Mammary epithelial cell (primary cell): ENCODE measurements at regions of chr5 and their contacts with region 1.

Region 1: GRCh38 chr5:128905571-128906110 is 59.6 kb upstream of the SLC27A6 start:
- DNase-seq: peak; percentile 36
- H3K4me3 ChIP-seq: no peak overlapping the region
- H3K27ac ChIP-seq: no peak overlapping the region
- H3K4me1 ChIP-seq: no peaks in the 10 kb centered on the region
- H3K27me3 ChIP-seq: peaks cover 3% of the 10 kb centered on the region
- CTCF ChIP-seq: peak; percentile 78 to 88

Region 2: GRCh38 chr5:128764911-128765310 is 140.7 kb before region 1 on chr5:
- CTCF ChIA-PET with region 1: no interaction called
- dilution Hi-C with region 1: no loop called
- in situ Hi-C with region 1: no loop called
- intact Hi-C with region 1: no loop called
- DNase-seq: no peak
- H3K4me3 ChIP-seq: no peak overlapping the region
- H3K27ac ChIP-seq: no peak overlapping the region
- H3K4me1 ChIP-seq: no peaks in the 10 kb centered on the region
- H3K27me3 ChIP-seq: no peaks in the 10 kb centered on the region
- CTCF ChIP-seq: no peak

Region 3: DNA sequence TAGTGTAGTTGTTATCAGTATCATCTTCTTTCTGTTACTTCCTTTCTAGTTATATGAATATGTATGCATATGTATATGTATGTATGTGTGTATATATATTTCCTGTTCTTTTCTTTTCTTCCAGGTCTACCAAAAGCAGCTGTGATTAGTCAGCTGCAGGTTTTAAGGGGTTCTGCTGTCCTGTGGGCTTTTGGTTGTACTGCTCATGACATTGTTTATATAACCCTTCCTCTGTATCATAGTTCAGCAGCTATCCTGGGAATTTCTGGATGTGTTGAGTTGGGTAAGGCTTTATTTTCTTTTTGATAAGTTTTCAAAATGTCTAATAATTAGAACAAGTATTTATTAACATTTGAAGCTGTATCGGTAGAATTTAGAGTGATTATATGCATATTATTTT is 82.8 kb after region 1 on chr5:
- CTCF ChIA-PET with region 1: no interaction called
- dilution Hi-C with region 1: no loop called
- in situ Hi-C with region 1: no loop called
- intact Hi-C with region 1: no loop called
- DNase-seq: no peak
- H3K4me3 ChIP-seq: no peak overlapping the region
- H3K27ac ChIP-seq: no peak overlapping the region
- H3K4me1 ChIP-seq: no peaks in the 10 kb centered on the region
- H3K27me3 ChIP-seq: no peaks in the 10 kb centered on the region
- CTCF ChIP-seq: no peak

Region 4: DNA sequence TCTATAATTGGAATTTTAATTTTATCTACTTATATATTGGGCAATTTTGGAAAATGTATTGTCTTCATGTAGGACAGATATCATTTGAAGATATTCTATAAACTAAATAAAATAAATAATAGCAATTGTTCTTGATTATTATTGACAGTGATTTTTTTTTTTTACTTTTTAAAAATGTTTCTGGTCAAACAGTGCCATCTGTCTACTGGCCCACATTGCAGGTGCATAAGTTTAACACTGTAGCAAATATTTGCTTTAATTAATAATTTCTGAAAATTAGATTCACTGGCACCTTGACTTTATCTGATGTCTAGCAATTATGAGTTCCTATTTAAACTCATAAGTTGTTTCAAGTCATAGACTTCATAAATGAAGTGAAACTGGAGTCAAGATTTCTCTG is 147.8 kb after region 1 on chr5:
- CTCF ChIA-PET with region 1: no interaction called
- dilution Hi-C with region 1: no loop called
- in situ Hi-C with region 1: no loop called
- intact Hi-C with region 1: loop called (anchors 1 kb)
- DNase-seq: no peak
- H3K4me3 ChIP-seq: no peak overlapping the region
- H3K27ac ChIP-seq: no peak overlapping the region
- H3K4me1 ChIP-seq: no peaks in the 10 kb centered on the region
- H3K27me3 ChIP-seq: no peaks in the 10 kb centered on the region
- CTCF ChIP-seq: peak in 1 of 2 donors; percentile 35

Region 5: DNA sequence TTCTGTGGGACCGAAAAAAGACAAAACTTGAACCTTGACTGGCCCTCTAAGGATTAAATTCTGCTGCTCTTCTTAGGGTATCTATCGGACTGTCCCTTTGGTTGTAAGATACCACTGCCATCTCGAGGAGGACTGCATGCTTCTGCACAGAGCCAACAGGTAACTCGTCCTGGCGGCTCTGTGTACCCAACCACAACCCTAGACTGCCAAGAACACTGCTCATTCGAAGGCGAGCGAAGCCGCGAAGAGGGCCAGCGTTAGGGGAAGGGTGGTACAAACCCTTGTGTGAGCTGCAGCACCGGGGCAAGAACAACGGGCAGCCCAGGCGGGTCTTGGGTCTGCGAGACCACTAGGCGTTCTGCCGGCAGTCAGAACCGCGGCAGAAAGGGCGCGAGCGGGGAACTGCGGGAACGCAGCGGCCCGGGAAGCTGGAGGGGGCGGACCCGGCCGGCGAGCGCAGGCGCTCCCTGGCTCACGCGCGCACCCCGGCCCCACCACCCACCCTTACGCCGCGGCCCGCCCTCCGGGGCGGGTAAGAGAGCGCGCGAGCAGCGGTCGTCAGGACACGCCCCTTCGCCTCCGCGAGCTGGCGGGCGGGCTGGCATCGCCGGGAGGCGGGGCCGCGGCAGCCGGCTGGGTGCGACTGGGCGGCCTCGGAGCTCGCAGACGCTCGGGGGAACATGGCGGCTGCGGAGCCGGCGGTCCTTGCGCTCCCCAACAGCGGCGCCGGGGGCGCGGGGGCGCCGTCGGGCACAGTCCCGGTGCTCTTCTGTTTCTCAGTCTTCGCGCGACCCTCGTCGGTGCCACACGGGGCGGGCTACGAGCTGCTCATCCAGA is 188.7 kb after region 1 on chr5 and contains the start of gene ISOC1:
- CTCF ChIA-PET with region 1: no interaction called
- dilution Hi-C with region 1: no loop called
- in situ Hi-C with region 1: no loop called
- intact Hi-C with region 1: loop called (anchors 1 kb)
- DNase-seq: peak; percentile 88
- H3K4me3 ChIP-seq: peak within 1 kb of the TSS; percentile 84 to 99 (median 96)
- H3K27ac ChIP-seq: peak within 1 kb of the TSS; percentile 48
- H3K4me1 ChIP-seq: peaks cover 3% of the 10 kb centered on the region
- H3K27me3 ChIP-seq: no peaks in the 10 kb centered on the region
- CTCF ChIP-seq: peak in 1 of 2 donors; percentile 34
- total RNA-seq, gene ISOC1: 15.6 to 19.7 TPM

Region 6: GRCh38 chr5:129120158-129120581 is 214.5 kb after region 1 on chr5:
- CTCF ChIA-PET with region 1: no interaction called
- dilution Hi-C with region 1: no loop called
- in situ Hi-C with region 1: loop called in 1 of 2 experiments (anchors 25 kb)
- intact Hi-C with region 1: no loop called
- DNase-seq: no peak
- H3K4me3 ChIP-seq: no peak overlapping the region
- H3K27ac ChIP-seq: no peak overlapping the region
- H3K4me1 ChIP-seq: no peaks in the 10 kb centered on the region
- H3K27me3 ChIP-seq: no peaks in the 10 kb centered on the region
- CTCF ChIP-seq: no peak

Region 7: DNA sequence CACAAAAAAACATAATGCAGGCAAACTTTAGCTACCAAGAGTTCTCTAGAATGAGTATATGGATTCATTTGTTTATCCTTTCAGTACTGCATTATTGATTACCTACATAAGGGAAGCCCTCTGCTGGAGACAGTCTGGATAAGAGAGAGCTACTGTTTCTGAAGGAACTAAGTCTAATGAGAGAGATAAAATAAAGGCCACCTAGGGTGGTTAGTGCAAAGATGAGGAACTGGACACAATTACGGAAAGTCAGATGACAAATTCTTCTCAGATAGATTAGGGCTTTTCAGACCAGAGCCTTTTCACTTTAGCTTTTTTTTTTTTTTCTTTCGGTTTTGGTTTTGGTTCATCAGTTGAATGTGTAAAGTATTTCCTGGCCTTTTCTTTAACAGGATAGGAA is 220.2 kb after region 1 on chr5:
- CTCF ChIA-PET with region 1: no interaction called
- dilution Hi-C with region 1: no loop called
- in situ Hi-C with region 1: loop called in 1 of 2 experiments (anchors 25 kb)
- intact Hi-C with region 1: loop called (anchors 2 kb)
- DNase-seq: no peak
- H3K4me3 ChIP-seq: no peak overlapping the region
- H3K27ac ChIP-seq: no peak overlapping the region
- H3K4me1 ChIP-seq: no peaks in the 10 kb centered on the region
- H3K27me3 ChIP-seq: no peaks in the 10 kb centered on the region
- CTCF ChIP-seq: peak in 1 of 2 donors; percentile 1

Region 8: GRCh38 chr5:129271303-129271702 is 365.7 kb after region 1 on chr5:
- CTCF ChIA-PET with region 1: no interaction called
- dilution Hi-C with region 1: no loop called
- in situ Hi-C with region 1: no loop called
- intact Hi-C with region 1: loop called (anchors 5 kb)
- DNase-seq: peak; percentile 5
- H3K4me3 ChIP-seq: no peak overlapping the region
- H3K27ac ChIP-seq: no peak overlapping the region
- H3K4me1 ChIP-seq: no peaks in the 10 kb centered on the region
- H3K27me3 ChIP-seq: no peaks in the 10 kb centered on the region
- CTCF ChIP-seq: peak; percentile 6 to 50